ENCODE measurements at regions of chr6 and their contacts with region 1.

Region 1: GRCh38 chr6:52020945-52021570 is 66.4 kb downstream of the PKHD1 start:
- DNase-seq: peak; percentile 64
- ATAC-seq: no peak
- H3K4me3 ChIP-seq: no peak overlapping the region
- H3K27ac ChIP-seq: no peak overlapping the region
- H3K4me1 ChIP-seq: no peaks in the 10 kb centered on the region
- H3K27me3 ChIP-seq: peaks cover 12% of the 10 kb centered on the region; the same call in 1 of the 2 replicates
- CTCF ChIP-seq: peak; percentile 84

Region 2: GRCh38 chr6:50816115-50816675 is 1204.9 kb before region 1 on chr6:
- CTCF ChIA-PET with region 1: interaction called, 3 read pairs
- POLR2A ChIA-PET with region 1: no interaction called
- intact Hi-C with region 1: loop called (anchors 1 kb)
- DNase-seq: peak; percentile 91
- ATAC-seq: peak; percentile 87
- H3K4me3 ChIP-seq: peak overlapping the region; percentile 92
- H3K27ac ChIP-seq: no peak overlapping the region
- H3K4me1 ChIP-seq: peaks cover 8% of the 10 kb centered on the region; the same call in 1 of the 2 replicates
- H3K27me3 ChIP-seq: peaks cover 18% of the 10 kb centered on the region
- CTCF ChIP-seq: peak; percentile 77

Region 3: GRCh38 chr6:51398064-51398705 is 622.9 kb before region 1 on chr6:
- CTCF ChIA-PET with region 1: no interaction called
- POLR2A ChIA-PET with region 1: no interaction called
- intact Hi-C with region 1: loop called (anchors 2 kb)
- DNase-seq: peak; percentile 39
- ATAC-seq: peak; percentile 40; the same call in 1 of the 2 replicates
- H3K4me3 ChIP-seq: no peak overlapping the region
- H3K27ac ChIP-seq: no peak overlapping the region
- H3K4me1 ChIP-seq: 0 out of 2 replicates have a peak, but pooled peaks cover 10% of the 10 kb centered on the region
- H3K27me3 ChIP-seq: no peaks in the 10 kb centered on the region
- CTCF ChIP-seq: no peak

Region 4: DNA sequence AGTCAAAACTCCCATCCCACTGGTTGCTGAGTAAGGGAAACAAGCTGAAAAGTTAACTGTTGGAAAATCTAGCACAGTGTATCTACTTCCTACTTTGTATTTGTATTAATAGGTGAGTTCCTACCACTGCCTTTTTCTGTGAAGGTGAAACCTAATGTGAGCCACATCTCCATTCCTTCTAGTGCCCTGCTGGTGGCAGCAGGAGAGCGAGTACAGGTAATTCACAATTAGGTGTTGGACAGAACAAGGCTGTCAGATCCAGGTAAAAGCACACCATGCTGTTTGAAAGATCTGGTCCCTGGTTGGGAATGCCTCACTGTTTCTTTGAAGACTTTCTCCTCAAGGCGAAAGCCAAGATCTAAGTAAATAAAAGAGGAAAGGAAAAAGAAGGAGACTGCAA is 462.0 kb before region 1 on chr6:
- CTCF ChIA-PET with region 1: no interaction called
- POLR2A ChIA-PET with region 1: no interaction called
- intact Hi-C with region 1: loop called (anchors 2 kb)
- DNase-seq: peak; percentile 69
- ATAC-seq: peak; percentile 84
- H3K4me3 ChIP-seq: no peak overlapping the region
- H3K27ac ChIP-seq: no peak overlapping the region
- H3K4me1 ChIP-seq: no peaks in the 10 kb centered on the region
- H3K27me3 ChIP-seq: peaks cover 3% of the 10 kb centered on the region; the same call in 1 of the 2 replicates
- CTCF ChIP-seq: peak; percentile 90

Region 5: DNA sequence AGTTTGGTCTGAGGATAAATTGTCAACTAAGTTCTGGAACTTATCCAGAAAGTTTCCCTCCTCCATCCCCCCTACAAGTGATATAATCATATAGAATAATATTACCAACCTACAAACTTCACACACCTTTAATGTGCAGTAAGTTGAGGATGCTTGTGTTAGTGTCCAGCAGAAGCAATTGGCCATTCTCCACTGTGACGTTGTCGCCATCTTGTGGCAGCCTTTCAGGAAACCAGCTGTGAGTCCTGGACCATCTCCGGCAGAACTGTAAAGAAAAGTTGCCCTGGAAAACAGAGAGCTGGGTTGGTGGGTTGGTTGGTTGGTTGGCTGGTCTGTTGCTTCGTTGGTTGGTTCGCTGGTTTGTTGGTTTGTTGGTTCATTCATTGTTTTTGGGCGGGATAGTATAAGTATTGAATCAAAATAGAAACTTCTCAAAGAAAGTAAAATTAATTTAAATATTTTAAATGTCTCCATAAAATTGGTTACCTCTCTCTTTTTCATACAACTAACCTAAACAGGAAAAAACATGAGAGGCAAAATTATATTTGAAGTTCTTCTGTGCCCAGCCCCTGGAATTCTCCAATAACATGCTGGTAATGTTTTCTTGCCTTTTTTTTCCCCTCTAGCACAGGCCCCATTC is 61.2 kb before region 1 on chr6:
- CTCF ChIA-PET with region 1: no interaction called
- POLR2A ChIA-PET with region 1: no interaction called
- intact Hi-C with region 1: loop called (anchors 2 kb)
- DNase-seq: peak; percentile 91
- ATAC-seq: peak; percentile 93
- H3K4me3 ChIP-seq: no peak overlapping the region
- H3K27ac ChIP-seq: no peak overlapping the region
- H3K4me1 ChIP-seq: 0 out of 2 replicates have a peak, but pooled peaks cover 3% of the 10 kb centered on the region
- H3K27me3 ChIP-seq: no peaks in the 10 kb centered on the region
- CTCF ChIP-seq: peak; percentile 96

Measured in PC-3 (cell line).